H1 (cell line): ENCODE measurements at regions of chr12 and their contacts with region 1.

Region 1: DNA sequence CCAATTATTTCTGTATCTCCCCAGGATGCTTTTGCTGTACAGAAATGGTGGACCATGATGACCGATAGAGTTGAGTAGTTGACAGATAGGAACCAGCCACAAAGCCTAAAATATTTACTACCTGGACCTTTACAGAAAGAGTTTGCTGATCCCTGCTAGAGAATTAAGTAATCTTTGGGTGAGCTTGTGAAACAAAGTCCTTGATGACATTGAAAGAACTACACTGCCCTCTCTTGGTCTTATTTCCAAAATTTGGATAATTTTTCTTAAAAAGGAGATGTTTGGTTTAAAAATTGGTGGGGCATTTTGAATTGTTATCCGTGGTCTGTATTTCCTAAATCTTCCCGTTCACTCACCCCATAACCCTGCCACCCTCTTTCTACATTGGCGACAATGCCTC is 13.7 kb upstream of the TCTN1 start:
- DNase-seq: no peak
- H3K4me3 ChIP-seq: no peak overlapping the region
- H3K27ac ChIP-seq: no peak overlapping the region
- H3K4me1 ChIP-seq: no peaks in the 10 kb centered on the region
- H3K27me3 ChIP-seq: no peaks in the 10 kb centered on the region
- CTCF ChIP-seq: peak in 2 of 3 experiments; percentile 26 to 33; a peak in 2 of 4 replicates
- EP300 ChIP-seq: no peak
- POLR2A ChIP-seq: no peak
- RAD21 ChIP-seq: peak; percentile 60 to 64

Region 2: DNA sequence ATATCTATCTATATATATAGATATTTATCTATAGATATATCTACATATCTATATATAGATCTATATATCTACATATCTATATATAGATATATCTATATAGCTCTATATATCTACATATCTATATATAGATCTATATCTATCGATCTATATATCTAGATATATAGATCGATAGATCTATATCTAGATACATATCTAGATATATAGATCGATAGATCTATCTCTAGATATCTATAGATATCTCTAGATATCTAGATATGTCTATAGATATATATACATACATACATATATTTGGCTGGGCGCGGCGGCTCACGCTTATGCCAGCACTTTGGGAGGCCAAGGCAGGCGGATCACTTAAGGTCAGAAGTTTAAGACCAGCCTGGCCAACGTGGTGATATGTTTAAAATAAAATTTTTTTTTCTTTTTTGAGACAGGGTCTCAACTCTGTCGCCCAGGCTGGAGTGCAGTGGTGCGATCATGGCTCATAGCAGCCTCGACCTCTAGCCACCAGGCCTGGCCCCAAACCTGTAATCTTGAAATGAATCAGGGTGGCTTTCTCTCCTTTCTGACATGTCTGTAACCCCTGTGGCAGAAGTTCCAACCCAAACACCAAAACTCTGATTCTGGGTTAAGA is 168.2 kb before region 1 on chr12:
- CTCF ChIA-PET with region 1: interaction called, 12 read pairs
- POLR2A ChIA-PET with region 1: no interaction called
- DNase-seq: no peak
- H3K4me3 ChIP-seq: peak overlapping the region in 1 of 4 experiments; percentile 65; a peak in 1 of 8 replicates
- H3K27ac ChIP-seq: no peak overlapping the region
- H3K4me1 ChIP-seq: no peaks in the 10 kb centered on the region
- H3K27me3 ChIP-seq: no peaks in the 10 kb centered on the region
- CTCF ChIP-seq: no peak
- EP300 ChIP-seq: no peak
- POLR2A ChIP-seq: no peak
- RAD21 ChIP-seq: no peak

Region 3: DNA sequence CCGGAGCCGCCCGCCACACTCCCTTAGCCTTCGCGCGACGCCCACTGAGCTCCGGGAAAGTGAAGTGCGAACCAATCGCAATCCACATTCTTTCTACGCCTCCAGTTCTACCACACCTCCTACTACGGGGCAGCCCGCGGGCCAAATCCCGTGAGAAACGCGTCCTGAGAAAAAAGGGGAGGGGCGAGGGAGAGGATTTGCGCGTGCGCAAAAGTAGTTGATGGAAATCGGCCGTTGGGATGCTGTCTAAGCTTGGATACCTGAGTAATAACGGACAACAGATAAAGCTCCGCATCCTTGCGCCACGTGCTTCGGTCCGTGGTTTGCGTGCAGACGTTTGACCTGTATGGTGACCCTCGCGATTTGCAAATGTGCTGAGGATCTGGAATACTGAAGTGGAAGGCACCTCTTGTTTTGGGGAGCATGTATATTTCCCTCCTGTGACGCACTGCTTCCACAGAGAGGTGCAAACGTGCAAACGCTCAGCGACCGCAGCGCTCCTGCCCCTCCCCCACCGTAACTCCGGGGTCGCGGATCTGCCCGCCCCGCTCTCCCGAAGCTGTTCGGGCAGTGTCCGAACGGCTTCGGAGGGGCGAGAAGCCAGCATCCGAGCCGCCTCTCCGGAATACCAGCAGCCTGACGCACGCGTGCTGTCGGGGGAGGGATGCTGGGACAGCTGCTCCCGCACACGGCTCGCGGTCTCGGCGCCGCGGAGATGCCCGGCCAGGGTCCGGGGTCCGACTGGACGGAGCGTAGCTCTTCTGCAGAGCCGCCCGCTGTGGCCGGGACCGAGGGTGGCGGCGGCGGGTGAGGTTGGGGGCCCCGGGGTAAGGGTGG is 131.8 kb before region 1 on chr12 and contains the starts of genes FAM216A and GPN3:
- CTCF ChIA-PET with region 1: interaction called, 34 read pairs
- POLR2A ChIA-PET with region 1: interaction called, 17 read pairs
- DNase-seq: peak; percentile 94
- H3K4me3 ChIP-seq: peak within 1 kb of the TSS; percentile 85 to 96 (median 90)
- H3K27ac ChIP-seq: peak within 1 kb of the TSS; percentile 92
- H3K4me1 ChIP-seq: peaks cover 0 to 7% (median 1%) of the 10 kb centered on the region in 4 experiments; a peak in 3 of 7 replicates
- H3K27me3 ChIP-seq: no peaks in the 10 kb centered on the region
- CTCF ChIP-seq: no peak
- EP300 ChIP-seq: no peak
- POLR2A ChIP-seq: peak; percentile 66 to 72; a peak in 2 of 3 replicates
- RAD21 ChIP-seq: no peak
- total RNA-seq, gene FAM216A: 19.8 and 22.2 TPM in 2 replicates
- total RNA-seq, gene GPN3: 49.7 and 50.8 TPM in 2 replicates

Region 4: DNA sequence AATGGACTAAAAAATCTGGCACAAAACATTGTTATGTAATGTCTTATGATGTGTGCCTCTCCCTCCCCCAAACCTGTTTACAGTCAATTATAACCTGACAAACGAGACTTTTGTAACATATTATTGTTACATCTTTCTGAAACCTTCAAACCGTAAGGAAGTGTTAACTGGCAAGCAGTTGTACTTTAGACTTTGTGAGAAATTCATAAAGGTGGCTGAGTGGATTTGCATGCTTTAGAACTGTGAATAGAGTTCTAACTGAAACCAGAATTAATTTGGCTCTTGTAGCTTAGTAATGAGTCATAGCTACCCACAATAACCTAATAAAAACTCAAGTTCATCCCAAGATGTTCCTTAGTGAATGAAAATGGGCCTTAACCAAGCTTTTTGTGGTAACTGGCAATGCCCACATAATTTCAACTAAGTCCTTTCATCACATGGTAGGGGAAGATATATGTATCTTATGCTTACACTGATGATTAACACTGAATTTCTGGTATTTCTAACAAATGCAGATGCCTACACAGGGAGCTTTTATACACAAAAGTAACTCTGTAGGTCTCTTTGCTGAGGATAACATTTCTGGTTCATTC is 68.4 kb before region 1 on chr12:
- CTCF ChIA-PET with region 1: interaction called, 21 read pairs
- POLR2A ChIA-PET with region 1: no interaction called
- DNase-seq: no peak
- H3K4me3 ChIP-seq: no peak overlapping the region
- H3K27ac ChIP-seq: no peak overlapping the region
- H3K4me1 ChIP-seq: no peaks in the 10 kb centered on the region
- H3K27me3 ChIP-seq: no peaks in the 10 kb centered on the region
- CTCF ChIP-seq: no peak
- EP300 ChIP-seq: no peak
- POLR2A ChIP-seq: no peak
- RAD21 ChIP-seq: no peak

Region 5: GRCh38 chr12:110555577-110556406 is 44.5 kb before region 1 on chr12:
- CTCF ChIA-PET with region 1: interaction called, 190 read pairs
- POLR2A ChIA-PET with region 1: no interaction called
- DNase-seq: no peak
- H3K4me3 ChIP-seq: no peak overlapping the region
- H3K27ac ChIP-seq: no peak overlapping the region
- H3K4me1 ChIP-seq: no peaks in the 10 kb centered on the region
- H3K27me3 ChIP-seq: no peaks in the 10 kb centered on the region
- CTCF ChIP-seq: no peak
- EP300 ChIP-seq: no peak
- POLR2A ChIP-seq: no peak
- RAD21 ChIP-seq: no peak

Region 6: GRCh38 chr12:110578522-110579238 is 21.6 kb before region 1 on chr12:
- CTCF ChIA-PET with region 1: interaction called, 10 read pairs
- POLR2A ChIA-PET with region 1: no interaction called
- DNase-seq: no peak
- H3K4me3 ChIP-seq: no peak overlapping the region
- H3K27ac ChIP-seq: no peak overlapping the region
- H3K4me1 ChIP-seq: peaks cover 0 to 12% (median 6%) of the 10 kb centered on the region in 4 experiments; a peak in 5 of 7 replicates
- H3K27me3 ChIP-seq: no peaks in the 10 kb centered on the region; a peak in 1 of 7 replicates
- CTCF ChIP-seq: no peak
- EP300 ChIP-seq: no peak
- POLR2A ChIP-seq: no peak
- RAD21 ChIP-seq: no peak

Region 7: GRCh38 chr12:110613771-110614684 is 13.8 kb after region 1 on chr12 and contains the start of gene TCTN1:
- CTCF ChIA-PET with region 1: interaction called, 10 read pairs
- POLR2A ChIA-PET with region 1: interaction called, 4 read pairs
- DNase-seq: peak; percentile 84 to 97
- H3K4me3 ChIP-seq: peak within 1 kb of the TSS; percentile 39 to 72 (median 66)
- H3K27ac ChIP-seq: no peak within 1 kb of the TSS
- H3K4me1 ChIP-seq: no peaks in the 10 kb centered on the region
- H3K27me3 ChIP-seq: no peaks in the 10 kb centered on the region
- CTCF ChIP-seq: no peak
- EP300 ChIP-seq: no peak
- POLR2A ChIP-seq: peak in 1 of 2 experiments; percentile 60; a peak in 1 of 3 replicates
- RAD21 ChIP-seq: no peak
- total RNA-seq, gene TCTN1: 11.1 and 16.4 TPM in 2 replicates

Region 8: DNA sequence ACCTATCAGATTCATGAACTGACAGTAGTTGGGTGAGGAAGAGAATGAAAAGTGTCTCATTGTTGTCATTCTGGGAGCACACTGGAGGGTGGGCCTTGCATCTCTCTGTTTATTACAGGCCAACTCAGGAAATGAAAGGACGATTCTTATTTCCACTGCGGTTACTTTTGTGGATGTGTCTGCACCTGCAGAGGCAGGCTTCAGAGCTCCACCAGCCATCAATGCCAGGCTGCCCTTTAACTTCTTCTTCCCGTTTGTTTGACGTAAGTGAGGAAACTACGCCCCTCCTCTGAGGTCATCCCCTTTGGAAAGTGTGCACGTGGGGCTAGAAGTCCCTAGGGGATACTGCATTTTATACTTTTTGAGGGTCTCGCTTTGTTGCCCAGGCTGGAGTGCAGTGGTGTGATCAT is 47.4 kb after region 1 on chr12:
- CTCF ChIA-PET with region 1: no interaction called
- POLR2A ChIA-PET with region 1: no interaction called
- DNase-seq: no peak
- H3K4me3 ChIP-seq: no peak overlapping the region
- H3K27ac ChIP-seq: no peak overlapping the region
- H3K4me1 ChIP-seq: no peaks in the 10 kb centered on the region
- H3K27me3 ChIP-seq: no peaks in the 10 kb centered on the region
- CTCF ChIP-seq: no peak
- EP300 ChIP-seq: no peak
- POLR2A ChIP-seq: no peak
- RAD21 ChIP-seq: no peak